CD4-positive, alpha-beta T cell (primary cell): ENCODE measurements at regions of chr11 and their contacts with region 1.

Region 1: GRCh38 chr11:129815596-129816461 is at the start of gene TMEM45B:
- DNase-seq: peak in 13 of 14 experiments; percentile 14 to 62 (median 33)
- ATAC-seq: peak; percentile 35
- H3K4me3 ChIP-seq: peak within 1 kb of the TSS; percentile 54
- H3K4me3 Mint-ChIP-seq: peak within 1 kb of the TSS; percentile 89
- H3K27ac ChIP-seq: no peak within 1 kb of the TSS
- H3K27ac Mint-ChIP-seq: peak within 1 kb of the TSS; percentile 95
- H3K4me1 ChIP-seq: peaks cover 38% of the 10 kb centered on the region
- H3K4me1 Mint-ChIP-seq: peaks cover 58% of the 10 kb centered on the region
- H3K27me3 ChIP-seq: peaks cover 5 to 9% of the 10 kb centered on the region in 2 experiments
- H3K27me3 Mint-ChIP-seq: peaks cover 40% of the 10 kb centered on the region
- CTCF ChIP-seq: no peak
- total RNA-seq, gene TMEM45B: 1.7 to 1.9 TPM

Region 2: GRCh38 chr11:129652828-129653227 is 163.0 kb before region 1 on chr11:
- CTCF ChIA-PET with region 1: no interaction called
- POLR2A ChIA-PET with region 1: no interaction called
- intact Hi-C with region 1: no loop called
- DNase-seq: no peak
- ATAC-seq: no peak
- H3K4me3 ChIP-seq: no peak overlapping the region
- H3K4me3 Mint-ChIP-seq: no peak overlapping the region
- H3K27ac ChIP-seq: no peak overlapping the region
- H3K27ac Mint-ChIP-seq: no peak overlapping the region
- H3K4me1 ChIP-seq: no peaks in the 10 kb centered on the region
- H3K4me1 Mint-ChIP-seq: no peaks in the 10 kb centered on the region
- H3K27me3 ChIP-seq: peaks cover 0 to 2% of the 10 kb centered on the region in 2 experiments
- H3K27me3 Mint-ChIP-seq: peaks cover 8% of the 10 kb centered on the region
- CTCF ChIP-seq: no peak

Region 3: GRCh38 chr11:129803533-129803932 is 12.3 kb before region 1 on chr11:
- CTCF ChIA-PET with region 1: interaction called, 3 read pairs
- POLR2A ChIA-PET with region 1: interaction called, 49 read pairs
- intact Hi-C with region 1: loop called in 1 of 2 experiments (anchors 2 kb)
- DNase-seq: no peak
- ATAC-seq: peak; percentile 18
- H3K4me3 ChIP-seq: no peak overlapping the region
- H3K4me3 Mint-ChIP-seq: peak overlapping the region; percentile 57
- H3K27ac ChIP-seq: peak overlapping the region in 1 of 2 donors; percentile 10
- H3K27ac Mint-ChIP-seq: peak overlapping the region; percentile 86
- H3K4me1 ChIP-seq: peaks cover 16% of the 10 kb centered on the region
- H3K4me1 Mint-ChIP-seq: peaks cover 57% of the 10 kb centered on the region
- H3K27me3 ChIP-seq: no peaks in the 10 kb centered on the region
- H3K27me3 Mint-ChIP-seq: peaks cover 6% of the 10 kb centered on the region
- CTCF ChIP-seq: no peak

Region 4: DNA sequence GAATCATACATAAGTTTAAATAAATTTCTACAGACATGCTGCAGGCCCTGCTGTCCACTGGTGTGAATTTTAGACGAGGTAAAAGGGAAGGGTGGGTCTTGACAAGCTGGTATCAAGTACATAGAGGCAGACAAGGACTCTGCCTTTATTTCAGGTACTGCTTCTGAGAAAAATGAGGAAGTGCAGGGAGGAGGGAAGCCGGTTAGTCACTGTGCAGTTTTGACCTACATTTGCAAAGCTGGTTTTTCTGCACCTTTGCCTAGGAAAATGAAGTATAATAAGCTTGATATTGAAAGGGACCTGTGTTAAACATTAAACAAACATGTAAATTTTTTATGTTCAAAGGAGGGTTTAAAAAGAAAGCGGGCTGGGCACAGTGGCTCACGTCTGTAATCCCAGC is 24.4 kb after region 1 on chr11:
- CTCF ChIA-PET with region 1: no interaction called
- POLR2A ChIA-PET with region 1: interaction called, 13 read pairs
- intact Hi-C with region 1: no loop called
- DNase-seq: peak in 2 of 14 experiments; percentile 22 to 35
- ATAC-seq: no peak
- H3K4me3 ChIP-seq: no peak overlapping the region
- H3K4me3 Mint-ChIP-seq: no peak overlapping the region
- H3K27ac ChIP-seq: no peak overlapping the region
- H3K27ac Mint-ChIP-seq: peak overlapping the region; percentile 36
- H3K4me1 ChIP-seq: peaks cover 27% of the 10 kb centered on the region
- H3K4me1 Mint-ChIP-seq: peaks cover 53% of the 10 kb centered on the region
- H3K27me3 ChIP-seq: no peaks in the 10 kb centered on the region
- H3K27me3 Mint-ChIP-seq: no peaks in the 10 kb centered on the region
- CTCF ChIP-seq: no peak

Region 5: GRCh38 chr11:129861702-129862113 is 45.9 kb after region 1 on chr11:
- CTCF ChIA-PET with region 1: no interaction called
- POLR2A ChIA-PET with region 1: interaction called, 8 read pairs
- intact Hi-C with region 1: loop called in 1 of 2 experiments (anchors 2 kb)
- DNase-seq: no peak
- ATAC-seq: no peak
- H3K4me3 ChIP-seq: no peak overlapping the region
- H3K4me3 Mint-ChIP-seq: no peak overlapping the region
- H3K27ac ChIP-seq: no peak overlapping the region
- H3K27ac Mint-ChIP-seq: peak overlapping the region; percentile 99
- H3K4me1 ChIP-seq: peaks cover 49% of the 10 kb centered on the region
- H3K4me1 Mint-ChIP-seq: peaks cover 66% of the 10 kb centered on the region
- H3K27me3 ChIP-seq: no peaks in the 10 kb centered on the region
- H3K27me3 Mint-ChIP-seq: no peaks in the 10 kb centered on the region
- CTCF ChIP-seq: no peak